ENCODE measurements at regions of chr14 and their contacts with region 1.

Region 1: GRCh38 chr14:34081576-34082136 is 130.8 kb upstream of the EGLN3 start:
- DNase-seq: peak; percentile 63
- H3K4me3 ChIP-seq: no peak overlapping the region
- CTCF ChIP-seq: no peak

Region 2: DNA sequence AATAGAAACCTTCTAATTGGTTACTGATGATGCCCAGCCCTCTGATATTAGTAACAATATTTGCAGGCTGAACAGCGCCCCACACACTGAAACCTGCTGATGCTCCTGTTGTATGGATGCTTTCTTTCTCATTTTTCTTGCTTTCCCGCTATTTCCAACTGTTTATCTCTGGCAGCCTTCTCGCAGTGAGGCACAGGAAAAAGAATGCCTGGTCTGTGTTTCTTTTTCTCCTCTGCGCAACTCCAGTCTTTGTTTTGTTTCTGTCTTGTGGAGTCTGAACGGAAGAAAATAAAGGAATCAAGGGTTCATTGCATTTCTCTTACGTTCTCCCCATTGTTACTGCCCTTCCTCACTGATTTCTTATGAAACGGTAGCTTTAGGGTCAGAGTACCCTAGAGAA is 582.0 kb before region 1 on chr14:
- in situ Hi-C with region 1: no loop called
- DNase-seq: no peak
- H3K4me3 ChIP-seq: no peak overlapping the region
- CTCF ChIP-seq: no peak

Region 3: DNA sequence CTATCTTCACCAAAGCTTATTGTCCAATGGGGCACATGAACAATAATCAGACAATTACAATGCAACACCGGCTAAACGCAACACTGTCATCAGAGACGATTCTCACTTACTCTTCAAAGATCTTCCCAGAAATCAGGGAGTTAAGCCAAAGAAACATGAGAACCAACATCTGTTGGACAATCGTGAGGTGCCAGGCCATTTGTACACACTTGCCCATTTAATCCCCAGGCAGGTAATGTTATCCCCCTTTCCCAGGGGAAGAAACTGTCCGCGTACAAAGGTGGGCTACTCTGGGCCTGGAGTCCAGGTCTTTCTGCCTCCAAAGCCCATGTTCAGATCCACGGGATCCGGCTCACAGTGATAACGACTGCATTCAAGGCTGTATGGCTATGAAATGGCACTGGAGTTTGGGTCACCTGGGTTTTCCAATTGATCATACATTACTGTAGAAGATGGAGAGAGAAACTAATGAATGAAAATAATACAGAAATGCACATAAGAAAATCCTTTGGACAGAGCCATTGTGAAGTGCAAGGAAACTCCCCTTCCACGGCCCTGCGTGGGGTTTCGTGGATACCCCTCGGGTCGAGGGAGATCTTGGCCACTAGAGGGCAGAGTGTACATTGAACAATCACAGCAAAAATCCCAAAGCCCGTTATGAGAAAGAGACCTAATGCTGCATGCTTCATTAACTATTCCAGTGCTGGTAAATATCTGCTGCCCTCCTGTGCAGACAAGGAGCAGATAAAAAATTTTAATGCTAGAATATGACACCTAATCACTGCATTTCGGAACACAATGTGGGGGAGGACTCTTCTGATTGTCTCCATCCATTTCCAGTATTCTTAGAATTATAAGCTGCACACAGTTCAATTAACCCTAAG is 242.2 kb before region 1 on chr14:
- in situ Hi-C with region 1: loop called (anchors 5 kb)
- DNase-seq: peak; percentile 28
- H3K4me3 ChIP-seq: no peak overlapping the region
- CTCF ChIP-seq: peak; percentile 84

Measured in astrocyte of the cerebellum (primary cell).